PC-3 (cell line): ENCODE measurements at regions of chr2 and their contacts with region 1.

Region 1: GRCh38 chr2:195937176-195937575 is 131.5 kb downstream of the DNAH7 start:
- DNase-seq: no peak
- ATAC-seq: no peak
- H3K4me3 ChIP-seq: no peak overlapping the region
- H3K27ac ChIP-seq: no peak overlapping the region
- H3K4me1 ChIP-seq: no peaks in the 10 kb centered on the region
- H3K27me3 ChIP-seq: no peaks in the 10 kb centered on the region
- CTCF ChIP-seq: no peak

Region 2: GRCh38 chr2:195575879-195576401 is 361.2 kb before region 1 on chr2:
- CTCF ChIA-PET with region 1: no interaction called
- POLR2A ChIA-PET with region 1: no interaction called
- intact Hi-C with region 1: loop called (anchors 5 kb)
- DNase-seq: peak; percentile 94
- ATAC-seq: peak; percentile 87
- H3K4me3 ChIP-seq: no peak overlapping the region; the same call in 1 of the 2 replicates
- H3K27ac ChIP-seq: peak overlapping the region; percentile 45
- H3K4me1 ChIP-seq: peaks cover 13% of the 10 kb centered on the region
- H3K27me3 ChIP-seq: no peaks in the 10 kb centered on the region
- CTCF ChIP-seq: peak; percentile 59

Region 3: DNA sequence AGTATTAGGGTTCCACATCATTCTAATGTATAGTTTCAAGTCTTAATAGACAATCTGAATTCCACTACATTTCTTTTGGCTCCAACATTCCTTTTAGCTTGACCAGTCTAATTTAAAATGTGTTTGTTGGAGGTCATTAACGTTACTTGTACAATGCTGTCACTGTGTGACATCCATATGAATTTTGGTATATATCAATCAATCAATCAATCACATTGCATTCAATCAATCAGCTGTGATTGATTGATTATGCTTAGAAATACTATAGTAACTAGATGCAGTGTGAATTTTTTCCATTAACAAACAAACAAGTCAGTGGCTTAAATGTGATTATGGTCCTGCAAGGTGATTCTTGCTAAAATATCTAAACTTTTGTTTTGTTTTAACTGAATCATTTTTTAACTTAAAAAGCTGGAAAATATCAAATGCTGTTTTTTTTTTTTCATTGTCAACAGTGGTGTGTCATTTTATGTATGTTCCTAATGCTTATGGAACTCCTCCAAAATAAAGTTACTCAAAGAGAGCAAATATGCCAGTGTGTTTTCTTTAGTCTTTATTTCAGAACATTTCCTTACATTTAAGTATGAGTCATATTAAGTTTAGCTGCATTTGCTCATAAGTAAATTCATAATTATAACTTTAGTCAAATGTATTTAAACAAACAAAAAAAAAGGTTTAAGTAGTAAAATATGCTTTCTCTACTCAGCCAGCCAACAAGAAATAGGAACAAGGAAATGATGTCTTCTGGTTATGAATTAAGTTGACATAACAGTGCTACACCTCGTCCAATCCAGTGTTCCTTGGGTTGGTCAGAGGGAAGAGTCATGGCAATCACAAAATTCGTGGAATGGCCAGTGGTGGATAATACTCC is 199.8 kb before region 1 on chr2:
- CTCF ChIA-PET with region 1: no interaction called
- POLR2A ChIA-PET with region 1: no interaction called
- intact Hi-C with region 1: loop called (anchors 5 kb)
- DNase-seq: peak; percentile 88
- ATAC-seq: peak; percentile 79
- H3K4me3 ChIP-seq: peak overlapping the region; percentile 13; the same call in 1 of the 2 replicates
- H3K27ac ChIP-seq: peak overlapping the region; percentile 84
- H3K4me1 ChIP-seq: peaks cover 42% of the 10 kb centered on the region
- H3K27me3 ChIP-seq: no peaks in the 10 kb centered on the region
- CTCF ChIP-seq: no peak

Region 4: GRCh38 chr2:195857132-195857531 is 80.0 kb before region 1 on chr2:
- CTCF ChIA-PET with region 1: no interaction called
- POLR2A ChIA-PET with region 1: no interaction called
- intact Hi-C with region 1: loop called (anchors 5 kb)
- DNase-seq: no peak
- ATAC-seq: no peak
- H3K4me3 ChIP-seq: no peak overlapping the region
- H3K27ac ChIP-seq: no peak overlapping the region
- H3K4me1 ChIP-seq: no peaks in the 10 kb centered on the region
- H3K27me3 ChIP-seq: no peaks in the 10 kb centered on the region
- CTCF ChIP-seq: no peak